ENCODE measurements at regions of chr15 and their contacts with region 1.

Region 1: GRCh38 chr15:92839696-92840095 is 60.4 kb upstream of the CHD2 start:
- DNase-seq: no peak
- H3K4me3 Mint-ChIP-seq: no peak overlapping the region
- H3K27ac Mint-ChIP-seq: peak overlapping the region; percentile 87
- H3K4me1 Mint-ChIP-seq: peaks cover 59% of the 10 kb centered on the region
- H3K27me3 Mint-ChIP-seq: no peaks in the 10 kb centered on the region

Region 2: GRCh38 chr15:92853222-92853621 is 13.5 kb after region 1 on chr15:
- CTCF ChIA-PET with region 1: interaction called, 14 read pairs
- POLR2A ChIA-PET with region 1: no interaction called
- DNase-seq: no peak
- H3K4me3 Mint-ChIP-seq: no peak overlapping the region
- H3K27ac Mint-ChIP-seq: no peak overlapping the region
- H3K4me1 Mint-ChIP-seq: peaks cover 30% of the 10 kb centered on the region
- H3K27me3 Mint-ChIP-seq: no peaks in the 10 kb centered on the region

Region 3: DNA sequence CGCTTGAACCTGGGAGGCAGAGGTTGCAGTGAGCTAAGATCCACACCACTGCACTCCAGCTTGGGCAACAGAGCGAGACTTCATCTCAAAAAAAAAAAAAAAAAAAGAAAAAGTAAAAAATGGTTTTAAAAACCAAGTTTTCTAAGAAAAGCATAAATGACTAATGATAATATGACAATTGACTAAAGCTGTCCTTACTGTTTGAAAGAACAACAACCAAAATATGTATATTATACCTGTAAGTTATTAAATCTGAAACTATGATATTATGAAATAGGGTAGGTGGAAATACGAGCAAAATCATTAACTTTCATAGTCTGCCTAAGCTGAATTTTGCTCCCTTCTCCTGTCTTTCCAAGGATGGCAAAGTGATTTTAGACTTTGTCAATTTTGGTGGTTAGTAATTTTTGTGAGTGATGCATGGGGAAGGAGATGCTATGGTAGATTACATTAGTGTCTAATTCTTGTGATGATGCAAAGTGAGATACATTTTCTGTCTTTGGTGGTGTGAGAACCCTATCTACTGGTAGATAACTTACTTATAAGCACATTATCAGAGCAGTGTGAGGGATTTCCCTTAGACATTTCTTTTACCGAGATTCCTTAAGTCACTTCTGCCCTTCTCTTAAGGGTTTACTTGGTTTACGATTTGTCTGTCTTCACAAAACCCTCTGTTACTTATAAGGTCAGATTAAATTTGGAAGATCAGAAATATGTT is 49.9 kb after region 1 on chr15:
- CTCF ChIA-PET with region 1: no interaction called
- POLR2A ChIA-PET with region 1: no interaction called
- DNase-seq: no peak
- H3K4me3 Mint-ChIP-seq: peak overlapping the region; percentile 58
- H3K27ac Mint-ChIP-seq: peak overlapping the region; percentile 73
- H3K4me1 Mint-ChIP-seq: peaks cover 71% of the 10 kb centered on the region
- H3K27me3 Mint-ChIP-seq: no peaks in the 10 kb centered on the region

Measured in activated CD4-positive, alpha-beta T cell treated with anti-CD3 and anti-CD28 coated beads, Interleukin-2, amount 10 ng/mL, durations not matched to agents 7 days and 5 days (primary cell).